ENCODE measurements at regions of chr4 and their contacts with region 1.

Region 1: DNA sequence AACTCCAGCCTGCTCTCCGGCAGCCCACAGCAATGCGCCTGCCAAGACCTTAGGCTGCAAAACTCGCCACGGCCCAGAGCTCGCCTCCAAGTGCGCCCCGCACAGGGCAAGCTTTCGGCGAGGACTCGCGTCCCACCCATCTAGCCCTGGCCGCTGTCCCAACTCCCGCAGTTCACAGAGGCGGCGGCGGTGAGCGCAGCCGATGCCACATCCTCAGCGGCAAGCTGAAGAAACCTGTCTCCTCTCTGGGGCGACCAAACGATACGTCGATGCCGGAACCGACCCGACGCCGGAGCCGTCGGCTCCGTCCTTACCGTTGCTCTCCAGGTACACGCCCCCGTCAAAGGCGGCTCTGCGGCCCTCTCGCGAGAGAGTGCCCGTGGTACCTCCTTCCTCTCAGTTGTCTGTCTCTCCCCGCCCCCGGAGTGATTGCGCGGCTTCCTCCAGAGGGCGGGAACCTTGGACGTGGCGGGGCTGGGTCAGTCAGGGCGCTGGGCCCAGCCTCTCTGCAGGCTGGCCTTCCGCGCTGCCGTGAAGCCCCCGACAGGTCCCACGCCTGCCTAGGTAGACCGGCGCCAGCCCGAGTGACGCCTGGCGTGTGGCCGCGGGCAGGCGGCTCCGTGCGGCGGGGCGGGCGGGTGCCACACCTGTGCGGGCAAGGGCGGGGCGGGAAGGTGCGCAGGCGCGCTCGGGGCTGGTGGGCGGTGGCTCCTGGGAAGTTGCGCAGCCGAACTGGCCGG is 380 bp upstream of the RAB33B start:
- DNase-seq: peak; percentile 96 to 98 (median 98)
- ATAC-seq: peak; percentile 93
- H3K4me3 ChIP-seq: peak overlapping the region; percentile 97
- H3K4me3 Mint-ChIP-seq: peak overlapping the region; percentile 94 to 99 (median 97)
- H3K27ac ChIP-seq: peak overlapping the region; percentile 97
- H3K27ac Mint-ChIP-seq: peak overlapping the region; percentile 96 to 100 (median 99)
- H3K4me1 ChIP-seq: peaks cover 30 to 36% of the 10 kb centered on the region in 2 donors
- H3K4me1 Mint-ChIP-seq: peaks cover 38 to 82% (median 62%) of the 10 kb centered on the region in 7 donors
- H3K27me3 ChIP-seq: no peaks in the 10 kb centered on the region
- H3K27me3 Mint-ChIP-seq: no peaks in the 10 kb centered on the region

Region 2: GRCh38 chr4:138919094-138919936 is 534.2 kb before region 1 on chr4:
- CTCF ChIA-PET with region 1: no interaction called
- POLR2A ChIA-PET with region 1: no interaction called
- intact Hi-C with region 1: no loop called
- DNase-seq: peak in 4 of 9 donors; percentile 6 to 40 (median 22)
- ATAC-seq: peak; percentile 75
- H3K4me3 ChIP-seq: no peak overlapping the region
- H3K4me3 Mint-ChIP-seq: peak overlapping the region in 2 of 10 donors; percentile 2 to 13
- H3K27ac ChIP-seq: no peak overlapping the region
- H3K27ac Mint-ChIP-seq: no peak overlapping the region
- H3K4me1 ChIP-seq: no peaks in the 10 kb centered on the region
- H3K4me1 Mint-ChIP-seq: peaks cover 0 to 7% (median 0%) of the 10 kb centered on the region in 7 donors
- H3K27me3 ChIP-seq: no peaks in the 10 kb centered on the region
- H3K27me3 Mint-ChIP-seq: peaks cover 4 to 21% (median 9%) of the 10 kb centered on the region in 5 donors

Region 3: GRCh38 chr4:139083956-139084803 is 369.4 kb before region 1 on chr4:
- CTCF ChIA-PET with region 1: no interaction called
- POLR2A ChIA-PET with region 1: interaction called, 15 read pairs
- intact Hi-C with region 1: loop called (anchors 1 kb)
- DNase-seq: peak; percentile 54 to 88 (median 84)
- ATAC-seq: peak; percentile 64
- H3K4me3 ChIP-seq: peak overlapping the region; percentile 99
- H3K4me3 Mint-ChIP-seq: peak overlapping the region; percentile 90 to 100 (median 92)
- H3K27ac ChIP-seq: peak overlapping the region; percentile 96
- H3K27ac Mint-ChIP-seq: peak overlapping the region; percentile 85 to 100 (median 96)
- H3K4me1 ChIP-seq: peaks cover 16 to 27% of the 10 kb centered on the region in 2 donors
- H3K4me1 Mint-ChIP-seq: peaks cover 16 to 49% (median 41%) of the 10 kb centered on the region in 7 donors
- H3K27me3 ChIP-seq: no peaks in the 10 kb centered on the region
- H3K27me3 Mint-ChIP-seq: no peaks in the 10 kb centered on the region

Region 4: DNA sequence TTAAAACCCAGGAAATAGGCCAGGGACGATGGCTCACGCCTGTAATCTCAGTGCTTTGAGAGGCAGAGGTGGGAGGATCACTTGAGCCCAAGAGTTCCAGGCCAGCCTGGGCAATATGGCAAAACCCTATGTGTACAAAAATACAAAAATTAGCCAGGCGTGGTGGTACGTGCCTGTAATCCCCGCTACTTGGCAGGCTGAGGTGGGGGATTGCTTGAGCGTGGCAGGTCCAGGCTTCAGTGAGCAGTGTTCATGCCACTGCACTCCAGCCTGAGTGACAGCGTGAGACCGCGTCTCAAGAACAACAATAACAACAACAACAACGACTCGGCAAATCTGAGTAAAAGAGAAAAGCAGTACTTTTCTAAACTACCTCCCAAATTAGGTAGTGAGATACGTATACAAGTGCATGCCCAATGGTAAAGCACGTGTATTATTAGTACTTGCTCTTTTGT is 138.3 kb before region 1 on chr4:
- CTCF ChIA-PET with region 1: no interaction called
- POLR2A ChIA-PET with region 1: no interaction called
- intact Hi-C with region 1: loop called in 1 of 2 experiments (anchors 5 kb)
- DNase-seq: no peak
- ATAC-seq: no peak
- H3K4me3 ChIP-seq: no peak overlapping the region
- H3K4me3 Mint-ChIP-seq: peak overlapping the region in 9 of 10 donors; percentile 7 to 78 (median 43)
- H3K27ac ChIP-seq: no peak overlapping the region
- H3K27ac Mint-ChIP-seq: peak overlapping the region in 6 of 9 donors; percentile 13 to 88 (median 66)
- H3K4me1 ChIP-seq: peaks cover 21 to 26% of the 10 kb centered on the region in 2 donors
- H3K4me1 Mint-ChIP-seq: peaks cover 65 to 84% (median 81%) of the 10 kb centered on the region in 7 donors
- H3K27me3 ChIP-seq: no peaks in the 10 kb centered on the region
- H3K27me3 Mint-ChIP-seq: no peaks in the 10 kb centered on the region

Region 5: DNA sequence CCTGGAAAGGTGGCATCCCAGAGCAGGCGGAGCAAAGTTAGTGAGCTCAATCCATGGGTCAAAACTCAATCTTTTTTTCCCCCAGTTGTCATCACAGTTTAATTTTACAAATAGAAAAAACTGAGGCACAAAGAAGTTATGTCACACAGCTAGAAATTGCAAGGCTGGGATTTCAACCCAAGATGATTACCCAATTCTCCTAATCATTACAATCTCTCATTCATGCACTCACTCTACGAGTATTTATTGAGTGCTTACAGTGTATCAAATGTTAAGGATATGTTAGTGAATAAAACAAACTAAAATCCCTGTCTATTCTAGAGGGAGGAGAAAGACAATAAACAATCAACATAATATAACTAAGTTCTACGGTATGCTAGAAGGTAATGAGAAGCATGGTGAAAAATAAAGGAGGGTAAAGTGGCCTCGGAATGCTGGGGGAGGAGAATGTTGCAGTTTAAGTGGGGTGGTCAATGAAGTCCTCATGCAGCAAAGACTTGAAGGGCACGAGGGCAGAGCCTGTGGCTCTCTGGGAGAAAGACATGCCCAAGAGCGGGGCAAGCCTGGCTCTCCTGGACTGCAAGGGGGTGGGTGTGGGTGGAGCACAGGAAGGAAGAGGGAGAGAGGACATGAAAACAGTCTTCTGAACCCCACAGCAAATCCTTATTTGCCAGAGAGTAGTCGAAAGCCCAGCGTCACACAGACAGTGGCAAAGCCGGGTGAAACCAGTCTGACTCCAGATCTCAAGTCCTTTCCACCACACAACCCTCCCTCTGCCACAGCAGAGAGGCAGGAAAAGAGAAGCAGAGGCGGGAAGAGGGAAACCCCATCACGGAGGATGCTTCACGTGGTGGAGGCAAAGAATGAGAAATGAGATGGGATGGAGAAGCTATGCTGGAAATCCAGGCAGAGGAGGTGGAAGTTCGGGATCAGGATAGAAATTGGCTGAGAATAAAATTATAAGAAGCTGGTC is 48.7 kb after region 1 on chr4:
- CTCF ChIA-PET with region 1: no interaction called
- POLR2A ChIA-PET with region 1: interaction called, 3 read pairs
- intact Hi-C with region 1: loop called in 1 of 2 experiments (anchors 1 kb)
- DNase-seq: no peak
- ATAC-seq: no peak
- H3K4me3 ChIP-seq: no peak overlapping the region
- H3K4me3 Mint-ChIP-seq: no peak overlapping the region
- H3K27ac ChIP-seq: no peak overlapping the region
- H3K27ac Mint-ChIP-seq: no peak overlapping the region
- H3K4me1 ChIP-seq: no peaks in the 10 kb centered on the region
- H3K4me1 Mint-ChIP-seq: peaks cover 0 to 7% (median 0%) of the 10 kb centered on the region in 7 donors
- H3K27me3 ChIP-seq: no peaks in the 10 kb centered on the region
- H3K27me3 Mint-ChIP-seq: peaks cover 0 to 7% (median 5%) of the 10 kb centered on the region in 5 donors

Region 6: DNA sequence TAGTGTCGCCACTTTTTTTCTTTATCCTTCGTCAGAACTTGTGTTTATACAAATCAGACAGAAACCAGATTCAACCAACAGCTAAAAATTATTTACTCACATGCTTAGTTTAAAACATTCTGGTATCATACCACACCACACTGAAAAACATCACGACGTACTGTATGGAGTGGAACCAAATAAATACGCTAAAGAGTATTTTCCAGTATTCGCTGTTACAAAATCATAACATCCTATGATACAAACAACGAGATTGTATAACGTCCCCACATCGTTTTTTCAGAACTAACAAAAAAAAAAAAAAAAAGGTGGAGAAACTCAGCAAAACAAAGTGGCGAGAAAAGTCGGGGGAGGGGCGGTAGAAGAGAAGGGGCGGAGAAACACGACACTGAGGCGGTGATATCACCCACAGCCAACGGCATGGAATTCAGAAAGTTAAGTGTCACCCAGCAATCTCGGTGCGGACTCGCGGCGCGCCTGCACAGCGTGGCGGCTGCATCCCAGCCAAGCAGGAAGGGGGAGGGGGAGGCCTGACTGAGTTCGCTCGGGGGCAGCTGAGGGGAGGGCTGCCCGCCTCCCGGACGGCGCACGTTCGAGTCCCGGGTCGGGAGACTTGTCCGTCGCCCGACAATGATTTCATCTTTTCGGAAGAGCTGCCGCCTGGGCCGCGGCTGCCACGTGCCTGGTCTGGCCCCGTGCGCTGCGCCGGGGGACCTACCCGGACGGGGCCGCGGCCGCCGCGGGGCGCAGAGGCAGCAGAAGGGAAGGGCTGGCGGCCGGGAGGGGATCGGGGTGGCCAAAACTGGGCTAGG is 101.6 kb after region 1 on chr4:
- CTCF ChIA-PET with region 1: no interaction called
- POLR2A ChIA-PET with region 1: interaction called, 37 read pairs
- intact Hi-C with region 1: loop called (anchors 1 kb)
- DNase-seq: peak; percentile 65 to 93 (median 88)
- ATAC-seq: peak; percentile 85
- H3K4me3 ChIP-seq: peak overlapping the region; percentile 68
- H3K4me3 Mint-ChIP-seq: peak overlapping the region; percentile 89 to 99 (median 98)
- H3K27ac ChIP-seq: peak overlapping the region; percentile 76
- H3K27ac Mint-ChIP-seq: peak overlapping the region; percentile 86 to 98 (median 97)
- H3K4me1 ChIP-seq: peaks cover 4 to 11% of the 10 kb centered on the region in 2 donors
- H3K4me1 Mint-ChIP-seq: peaks cover 19 to 49% (median 40%) of the 10 kb centered on the region in 7 donors
- H3K27me3 ChIP-seq: no peaks in the 10 kb centered on the region
- H3K27me3 Mint-ChIP-seq: peaks cover 0 to 11% (median 0%) of the 10 kb centered on the region in 5 donors

Region 7: DNA sequence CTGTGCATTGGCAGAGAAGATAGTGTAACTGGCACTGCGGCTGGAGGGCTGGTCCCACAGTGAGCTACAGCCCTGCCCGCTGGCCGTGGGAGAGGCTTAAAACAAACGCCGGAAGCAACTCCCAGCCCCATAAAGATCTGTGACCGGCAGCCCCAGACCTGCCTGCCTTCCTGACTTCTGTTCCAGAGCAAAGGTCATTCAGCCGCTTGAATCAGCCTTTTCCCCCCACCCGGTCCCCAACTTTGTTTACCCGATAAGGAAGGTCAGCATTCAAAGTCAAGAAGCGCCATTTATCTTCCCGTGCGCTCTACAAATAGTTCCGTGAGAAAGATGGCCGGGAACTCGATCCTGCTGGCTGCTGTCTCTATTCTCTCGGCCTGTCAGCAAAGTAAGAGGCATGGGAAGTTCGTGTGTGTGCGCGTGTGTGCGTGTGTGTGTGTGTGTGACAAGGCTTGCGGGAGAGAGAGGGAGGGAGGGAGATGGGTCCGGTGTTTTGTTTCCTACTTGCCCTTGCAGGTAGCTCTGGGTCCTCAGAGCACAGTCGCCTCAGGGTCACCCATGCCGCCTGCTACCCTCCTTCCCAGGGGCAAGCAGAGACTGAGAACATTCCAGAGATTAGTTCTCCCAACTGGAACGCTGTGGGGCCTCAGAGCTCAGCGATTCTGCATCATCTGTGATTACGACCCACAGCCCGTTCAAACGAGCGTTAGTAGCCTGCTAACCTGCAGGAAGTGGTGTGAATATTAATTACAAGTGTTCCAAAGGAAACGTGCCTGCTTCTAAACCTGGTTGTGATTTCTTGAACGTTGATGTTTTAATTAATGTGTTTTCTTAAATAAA is 212.4 kb after region 1 on chr4 and contains the start of gene MGST2:
- CTCF ChIA-PET with region 1: no interaction called
- POLR2A ChIA-PET with region 1: no interaction called
- intact Hi-C with region 1: loop called in 1 of 2 experiments (anchors 2 kb)
- DNase-seq: peak in 5 of 9 donors; percentile 17 to 51 (median 27)
- ATAC-seq: peak; percentile 61
- H3K4me3 ChIP-seq: peak within 1 kb of the TSS; percentile 64
- H3K4me3 Mint-ChIP-seq: peak within 1 kb of the TSS; percentile 90 to 99 (median 94)
- H3K27ac ChIP-seq: peak within 1 kb of the TSS; percentile 42
- H3K27ac Mint-ChIP-seq: peak within 1 kb of the TSS; percentile 49 to 95 (median 88)
- H3K4me1 ChIP-seq: peaks cover 0 to 9% of the 10 kb centered on the region in 2 donors
- H3K4me1 Mint-ChIP-seq: peaks cover 15 to 44% (median 19%) of the 10 kb centered on the region in 7 donors
- H3K27me3 ChIP-seq: no peaks in the 10 kb centered on the region
- H3K27me3 Mint-ChIP-seq: no peaks in the 10 kb centered on the region
- total RNA-seq, gene MGST2: 1.4 to 37.3 (median 1.9) TPM

Region 8: GRCh38 chr4:141220655-141221605 is 1767.4 kb after region 1 on chr4 and contains the start of gene ZNF330:
- CTCF ChIA-PET with region 1: no interaction called
- POLR2A ChIA-PET with region 1: no interaction called
- intact Hi-C with region 1: loop called in 1 of 2 experiments (anchors 10 kb)
- DNase-seq: peak; percentile 80 to 97 (median 90)
- ATAC-seq: peak; percentile 97
- H3K4me3 ChIP-seq: peak within 1 kb of the TSS; percentile 94
- H3K4me3 Mint-ChIP-seq: peak within 1 kb of the TSS; percentile 91 to 99 (median 94)
- H3K27ac ChIP-seq: peak within 1 kb of the TSS; percentile 93
- H3K27ac Mint-ChIP-seq: peak within 1 kb of the TSS; percentile 91 to 97 (median 96)
- H3K4me1 ChIP-seq: peaks cover 9 to 13% of the 10 kb centered on the region in 2 donors
- H3K4me1 Mint-ChIP-seq: peaks cover 24 to 58% (median 52%) of the 10 kb centered on the region in 7 donors
- H3K27me3 ChIP-seq: no peaks in the 10 kb centered on the region
- H3K27me3 Mint-ChIP-seq: peaks cover 0 to 18% (median 6%) of the 10 kb centered on the region in 5 donors
- total RNA-seq, gene ZNF330: 31.7 to 44.7 (median 41.0) TPM

Measured in naive thymus-derived CD4-positive, alpha-beta T cell (primary cell).